GM13977 (cell line): ENCODE measurements at regions of chr17 and their contacts with region 1.

Region 1: DNA sequence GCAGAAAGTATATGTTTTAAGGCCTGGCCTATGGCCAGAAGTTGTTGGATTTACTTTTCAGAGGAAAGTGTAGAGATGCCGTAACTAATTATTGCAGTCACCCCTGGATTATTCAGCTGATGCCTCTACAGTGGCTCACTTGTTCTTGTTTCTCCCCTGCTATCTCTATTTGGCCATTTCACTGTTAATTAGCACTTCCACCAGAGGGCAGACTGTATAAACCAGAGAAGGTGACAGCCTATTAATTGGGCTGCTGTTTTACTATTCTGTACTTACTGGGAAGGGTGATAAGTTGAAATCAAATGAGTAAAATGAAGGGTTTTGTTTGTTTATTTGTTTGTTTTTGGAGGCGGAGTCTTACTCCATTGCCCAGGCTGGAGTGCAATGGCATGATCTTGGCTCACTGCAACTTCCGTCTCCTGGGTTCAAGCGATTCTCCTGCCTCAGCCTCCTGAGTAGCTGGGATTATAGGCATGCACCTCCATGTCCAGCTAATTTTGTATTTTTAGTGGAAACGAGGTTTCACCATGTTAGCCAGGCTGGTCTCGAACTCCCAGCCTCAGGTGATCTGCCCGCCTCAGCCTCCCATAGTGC is 66.0 kb downstream of the CDK12 start:
- DNase-seq: no peak
- CTCF ChIP-seq: peak; percentile 53

Region 2: GRCh38 chr17:39461113-39461925 is 66.0 kb before region 1 on chr17 and contains the start of gene CDK12:
- in situ Hi-C with region 1: no loop called
- DNase-seq: peak; percentile 97
- CTCF ChIP-seq: no peak

Region 3: DNA sequence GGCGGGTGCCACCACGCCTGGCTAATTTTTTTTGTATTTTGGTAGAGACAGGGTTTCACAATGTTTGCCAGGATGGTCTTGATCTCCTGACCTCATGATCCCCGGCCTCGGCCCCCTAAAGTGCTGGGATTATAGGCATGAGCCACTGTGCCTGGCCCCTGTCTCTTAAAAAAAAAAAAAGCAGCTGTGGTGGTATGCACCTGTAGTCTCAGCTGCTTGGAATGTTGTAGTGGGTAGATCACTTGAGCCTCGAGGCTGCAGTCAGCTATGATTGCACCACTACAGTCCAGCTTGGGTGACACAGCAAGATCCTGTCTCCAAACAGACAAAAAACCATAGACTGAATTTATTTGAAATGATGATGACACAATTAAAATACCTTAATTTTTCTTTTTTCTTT is 41.8 kb before region 1 on chr17:
- in situ Hi-C with region 1: loop called (anchors 5 kb)
- DNase-seq: no peak
- CTCF ChIP-seq: no peak